GM10248 (cell line): ENCODE measurements at regions of chr12 and their contacts with region 1.

Region 1: GRCh38 chr12:19867151-19867550 is 427.9 kb downstream of the AEBP2 start:
- DNase-seq: no peak
- CTCF ChIP-seq: no peak

Region 2: GRCh38 chr12:19883890-19884480 is 16.8 kb after region 1 on chr12:
- CTCF ChIA-PET with region 1: interaction called, 16 read pairs
- POLR2A ChIA-PET with region 1: no interaction called
- DNase-seq: no peak
- CTCF ChIP-seq: no peak

Region 3: DNA sequence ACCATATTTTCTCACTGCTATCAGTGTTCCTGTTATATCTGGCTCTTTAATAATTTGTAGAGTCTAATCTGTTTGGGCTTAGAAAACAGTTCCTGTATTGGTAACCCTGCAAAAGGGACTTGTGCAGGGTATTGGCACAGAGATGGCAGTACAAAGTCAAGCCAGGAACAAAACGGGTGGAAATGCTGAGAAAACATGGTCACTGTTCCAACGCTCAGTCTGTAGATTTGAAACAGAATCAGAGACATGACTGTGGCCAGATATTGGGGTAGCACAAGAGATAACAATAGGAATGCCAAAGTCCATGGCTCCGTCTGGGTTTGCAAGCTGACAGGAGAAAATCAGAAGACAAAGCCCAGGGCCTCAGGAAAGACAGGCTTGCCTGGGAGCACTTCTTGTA is 210.5 kb after region 1 on chr12:
- CTCF ChIA-PET with region 1: no interaction called
- POLR2A ChIA-PET with region 1: no interaction called
- DNase-seq: no peak
- CTCF ChIP-seq: no peak